Sciatic nerve (tissue), 2 donors: ENCODE measurements at regions of chr12 and their contacts with region 1.

Region 1: GRCh38 chr12:9361879-9362326 is 153.7 kb upstream of the PZP start:
- DNase-seq: no peak
- ATAC-seq: no peak

Region 2: DNA sequence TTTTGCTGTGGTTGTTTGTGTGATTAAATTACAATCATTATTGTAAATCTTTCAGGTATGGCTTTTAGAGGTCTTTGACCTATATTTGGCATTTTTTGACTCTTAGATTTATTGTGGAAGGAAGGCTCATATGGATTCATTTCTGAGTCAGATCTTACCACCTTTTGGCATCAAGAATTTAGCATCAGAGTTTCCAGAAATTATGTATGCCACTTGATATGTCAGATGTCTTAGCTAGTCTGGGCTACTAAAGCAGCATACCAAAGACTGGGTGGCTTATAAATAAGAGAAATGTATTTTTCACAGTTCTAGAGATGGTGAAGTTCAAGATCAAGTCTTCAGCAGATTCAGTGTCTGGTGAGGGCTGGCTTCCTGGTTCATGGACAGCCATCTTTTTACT is 24.2 kb before region 1 on chr12:
- intact Hi-C with region 1: loop called (anchors 1 kb)
- DNase-seq: no peak
- ATAC-seq: no peak